ENCODE measurements at regions of chr11 and their contacts with region 1.

Region 1: GRCh38 chr11:119684361-119685110 is 44.5 kb downstream of the NECTIN1 start:
- DNase-seq: peak; percentile 36
- ATAC-seq: peak in 1 of 2 donors; percentile 56

Region 2: GRCh38 chr11:119791701-119792151 is 107.2 kb after region 1 on chr11:
- intact Hi-C with region 1: no loop called
- DNase-seq: peak; percentile 33
- ATAC-seq: peak in 1 of 2 donors; percentile 52

Region 3: DNA sequence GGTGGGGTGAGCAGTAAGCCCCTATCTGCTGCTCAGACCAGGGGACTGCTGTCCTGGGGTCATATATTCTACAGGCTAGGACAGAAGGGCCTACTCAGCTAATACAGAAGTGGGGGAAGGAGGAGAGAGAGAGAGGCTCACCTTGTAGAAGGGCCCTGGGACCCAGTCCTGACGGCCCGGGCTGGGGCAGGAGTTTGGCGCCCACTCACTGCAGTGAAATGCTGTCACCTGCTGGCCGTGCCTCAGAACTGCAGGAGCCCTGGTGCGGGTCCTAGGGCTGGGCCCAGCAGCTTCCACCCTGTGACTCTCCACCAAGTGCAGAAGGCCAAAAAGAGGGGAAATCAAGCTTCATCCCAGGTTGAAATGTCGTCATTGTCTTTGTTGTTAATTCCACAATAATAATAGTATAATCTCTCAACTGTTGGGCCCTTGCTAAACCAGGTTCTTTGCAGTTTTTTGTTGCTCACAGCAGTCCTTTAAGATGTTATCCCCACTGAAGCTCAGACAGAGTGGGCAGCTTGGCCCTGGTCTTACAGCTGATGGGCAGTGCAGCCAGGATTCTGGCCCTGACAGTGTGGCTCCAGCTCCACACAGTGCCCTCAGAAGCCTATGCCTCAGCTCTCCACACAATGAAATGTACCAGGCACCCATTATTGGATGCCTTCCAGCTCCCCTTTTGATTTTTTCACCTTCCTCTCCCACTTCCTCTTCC is 423.8 kb after region 1 on chr11:
- intact Hi-C with region 1: loop called in 1 of 2 experiments (anchors 5 kb)
- DNase-seq: peak; percentile 72
- ATAC-seq: peak; percentile 90 to 93